ENCODE measurements at regions of chr13 and their contacts with region 1.

Region 1: DNA sequence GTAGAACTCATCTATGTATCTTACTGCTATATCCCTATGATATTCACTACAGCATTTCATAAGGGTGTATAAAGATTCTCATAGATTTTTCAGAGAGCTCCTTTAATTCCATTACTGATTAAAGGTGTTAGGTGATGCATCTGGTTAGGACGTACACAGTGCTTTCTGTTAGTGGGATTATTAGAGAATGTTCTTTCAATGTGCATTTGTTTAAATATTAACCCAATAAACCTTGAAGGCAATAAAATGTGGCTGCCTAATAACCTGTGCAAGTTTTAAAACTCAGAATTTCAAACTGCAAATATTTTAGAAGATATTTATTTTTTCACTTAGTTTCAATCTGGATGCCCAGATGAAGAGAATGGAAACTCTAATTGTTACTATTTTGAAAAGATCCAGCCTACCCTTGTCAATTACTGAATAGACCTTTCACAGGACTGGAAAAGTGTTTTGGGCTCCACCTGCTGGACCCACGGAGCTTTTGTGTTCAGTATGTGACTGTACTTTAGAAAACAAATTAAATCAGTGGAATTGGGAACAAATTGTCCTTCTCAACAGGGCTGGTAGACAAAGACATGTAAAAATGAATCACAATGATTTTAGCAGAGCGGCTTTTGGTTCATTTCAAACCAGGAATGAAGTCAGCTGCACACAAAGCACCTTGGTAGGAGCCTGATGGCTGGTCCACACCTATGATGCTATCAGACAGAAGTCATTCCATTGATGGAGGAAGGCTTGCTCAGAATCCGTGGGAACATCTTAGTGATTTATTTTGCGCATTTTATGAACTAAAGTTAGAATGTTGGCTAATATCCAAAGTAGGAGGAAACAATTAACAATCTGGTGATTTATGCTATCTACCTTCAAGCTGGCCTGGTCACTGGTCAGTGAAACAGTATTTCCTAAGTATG is 89.4 kb upstream of the RAP2A start:
- DNase-seq: no peak
- H3K4me3 ChIP-seq: no peak overlapping the region
- H3K27ac ChIP-seq: peak overlapping the region in 3 of 4 donors; percentile 38 to 62 (median 39)
- H3K4me1 ChIP-seq: peaks cover 0 to 51% (median 12%) of the 10 kb centered on the region in 3 donors
- H3K27me3 ChIP-seq: no peaks in the 10 kb centered on the region
- CTCF ChIP-seq: peak in 5 of 6 experiments; percentile 57 to 79 (median 71)
- POLR2A ChIP-seq: no peak

Region 2: GRCh38 chr13:97109841-97110492 is 234.6 kb before region 1 on chr13:
- intact Hi-C with region 1: loop called (anchors 2 kb)
- DNase-seq: no peak
- H3K4me3 ChIP-seq: peak overlapping the region in 1 of 4 donors; percentile 43
- H3K27ac ChIP-seq: peak overlapping the region; percentile 5 to 82 (median 38)
- H3K4me1 ChIP-seq: peaks cover 0 to 58% (median 22%) of the 10 kb centered on the region in 3 donors
- H3K27me3 ChIP-seq: no peaks in the 10 kb centered on the region
- CTCF ChIP-seq: peak; percentile 91 to 98 (median 96)
- POLR2A ChIP-seq: no peak

Region 3: DNA sequence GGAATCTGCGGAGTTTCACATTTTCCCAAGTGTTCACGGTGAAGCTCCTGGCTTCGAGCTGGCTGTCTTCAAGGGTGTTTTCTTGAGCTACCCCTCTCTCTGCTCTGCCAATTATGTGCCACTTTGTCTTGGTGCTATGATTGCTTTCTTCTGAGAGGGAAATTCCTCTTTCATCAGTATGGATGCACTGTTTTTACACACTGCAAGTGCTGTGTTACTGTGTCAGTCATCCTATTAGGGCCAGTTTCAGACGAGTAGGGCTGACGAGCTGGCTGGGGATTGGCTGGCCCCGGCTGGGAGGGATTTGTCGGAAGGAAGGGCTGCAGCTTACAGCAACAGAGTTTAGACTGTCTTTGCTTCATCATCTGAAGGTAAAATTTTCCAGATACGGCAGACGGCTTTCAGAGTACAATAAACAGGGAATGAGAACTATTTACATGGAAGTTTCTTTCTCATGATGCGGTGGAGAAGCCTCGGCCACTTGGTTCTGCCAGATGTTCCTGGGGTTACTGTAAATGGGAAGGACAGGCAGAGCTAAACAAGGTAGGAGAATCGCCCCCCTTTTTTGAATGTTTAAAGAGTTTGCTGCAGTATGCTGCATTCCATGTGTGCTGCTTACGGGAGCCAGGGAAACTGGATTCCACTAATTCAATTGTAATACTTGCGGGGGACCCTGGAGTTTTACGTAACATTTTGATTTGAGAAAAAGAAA is 122.4 kb before region 1 on chr13 and contains the start of gene MBNL2:
- intact Hi-C with region 1: loop called (anchors 5 kb)
- DNase-seq: peak; percentile 39
- H3K4me3 ChIP-seq: peak within 1 kb of the TSS; percentile 48 to 81 (median 57)
- H3K27ac ChIP-seq: peak within 1 kb of the TSS; percentile 86 to 94 (median 92)
- H3K4me1 ChIP-seq: peaks cover 23 to 59% (median 39%) of the 10 kb centered on the region in 3 donors
- H3K27me3 ChIP-seq: no peaks in the 10 kb centered on the region
- CTCF ChIP-seq: peak in 1 of 6 experiments; percentile 19
- POLR2A ChIP-seq: peak in 3 of 4 donors; percentile 38 to 92 (median 80)
- total RNA-seq, gene MBNL2: 18.3 to 58.7 (median 29.7) TPM

Region 4: GRCh38 chr13:98495627-98496478 is 1151.3 kb after region 1 on chr13:
- intact Hi-C with region 1: no loop called
- DNase-seq: no peak
- H3K4me3 ChIP-seq: peak overlapping the region in 1 of 4 donors; percentile 39
- H3K27ac ChIP-seq: peak overlapping the region; percentile 57 to 92 (median 83)
- H3K4me1 ChIP-seq: peaks cover 26 to 91% (median 58%) of the 10 kb centered on the region in 3 donors
- H3K27me3 ChIP-seq: no peaks in the 10 kb centered on the region
- CTCF ChIP-seq: no peak
- POLR2A ChIP-seq: peak in 1 of 4 donors; percentile 6